ENCODE measurements at regions of chr16 and their contacts with region 1.

Region 1: DNA sequence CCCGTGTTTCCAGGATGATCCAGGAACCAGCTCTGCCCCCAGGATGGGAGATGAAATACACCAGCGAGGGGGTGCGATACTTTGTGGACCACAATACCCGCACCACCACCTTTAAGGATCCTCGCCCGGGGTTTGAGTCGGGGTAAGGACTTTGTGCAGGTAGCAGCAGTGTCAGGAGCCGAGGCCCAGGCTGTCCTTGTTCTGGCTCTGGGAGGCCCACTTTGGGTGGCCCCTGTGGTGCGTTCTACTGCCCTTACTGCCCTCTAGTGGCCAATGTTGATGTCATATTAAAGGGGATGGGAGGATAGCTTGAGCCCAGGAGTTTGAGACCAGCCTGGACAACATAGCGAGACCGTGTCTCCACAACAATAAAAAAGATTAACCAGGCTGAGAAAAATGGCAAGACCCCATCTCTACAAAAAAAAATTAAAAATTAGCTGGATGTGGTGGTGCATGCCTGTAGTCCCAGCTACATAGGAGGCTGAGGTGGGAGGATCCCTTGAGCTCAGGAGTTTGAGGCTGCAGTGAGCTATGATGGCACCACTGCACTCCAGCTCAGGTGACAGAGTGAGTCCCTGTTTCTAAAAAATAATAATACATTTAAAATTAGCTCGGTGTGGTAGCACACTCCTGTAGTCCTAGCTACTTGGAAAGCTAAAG is 20.9 kb upstream of the CLEC18A start:
- DNase-seq: peak; percentile 58
- H3K4me3 ChIP-seq: no peak overlapping the region
- H3K27ac ChIP-seq: no peak overlapping the region
- H3K4me1 ChIP-seq: peaks cover 3% of the 10 kb centered on the region
- H3K27me3 ChIP-seq: no peaks in the 10 kb centered on the region
- CTCF ChIP-seq: peak; percentile 64 to 72
- POLR2A ChIP-seq: no peak

Region 2: GRCh38 chr16:69565671-69566239 is 364.5 kb before region 1 on chr16 and contains the start of gene NFAT5:
- CTCF ChIA-PET with region 1: no interaction called
- POLR2A ChIA-PET with region 1: no interaction called
- dilution Hi-C with region 1: no loop called
- intact Hi-C with region 1: no loop called
- DNase-seq: peak; percentile 94
- H3K4me3 ChIP-seq: peak within 1 kb of the TSS; percentile 84 to 95 (median 93)
- H3K27ac ChIP-seq: peak within 1 kb of the TSS; percentile 83
- H3K4me1 ChIP-seq: peaks cover 31% of the 10 kb centered on the region
- H3K27me3 ChIP-seq: no peaks in the 10 kb centered on the region
- CTCF ChIP-seq: no peak
- POLR2A ChIP-seq: peak; percentile 77
- total RNA-seq, gene NFAT5: 42.0 and 49.5 TPM in 2 replicates

Region 3: DNA sequence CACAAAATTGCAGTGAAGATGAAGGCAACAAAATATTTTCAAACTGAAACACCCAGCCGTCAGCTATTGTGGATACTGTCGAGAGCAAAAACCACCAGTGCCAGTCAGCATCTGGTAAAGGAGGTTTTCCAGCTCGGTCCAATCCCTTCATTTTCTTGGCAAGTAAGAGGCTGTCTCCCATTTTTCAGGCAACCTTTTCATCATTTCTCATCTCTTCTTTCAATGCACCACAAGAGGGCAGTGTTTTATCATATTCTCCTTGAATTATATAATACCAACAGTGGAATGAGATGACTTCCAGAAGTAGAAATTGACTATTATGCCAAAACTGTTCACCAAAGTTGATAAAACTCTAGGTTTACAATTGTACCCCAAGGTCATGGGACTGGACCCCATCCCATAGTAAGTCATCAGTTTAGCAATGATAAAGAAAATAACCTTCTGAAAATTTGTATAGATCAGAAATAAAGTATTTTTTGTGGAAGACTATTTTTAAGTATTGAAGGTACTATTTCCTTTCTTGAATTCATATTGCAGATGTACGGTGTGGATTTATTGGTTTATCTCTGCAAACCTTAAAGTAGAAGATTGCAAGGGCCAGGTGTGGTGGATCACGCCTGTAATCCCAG is 220.7 kb before region 1 on chr16:
- CTCF ChIA-PET with region 1: interaction called, 3 read pairs
- POLR2A ChIA-PET with region 1: no interaction called
- dilution Hi-C with region 1: no loop called
- intact Hi-C with region 1: loop called (anchors 2 kb)
- DNase-seq: peak; percentile 71
- H3K4me3 ChIP-seq: no peak overlapping the region
- H3K27ac ChIP-seq: no peak overlapping the region
- H3K4me1 ChIP-seq: no peaks in the 10 kb centered on the region
- H3K27me3 ChIP-seq: no peaks in the 10 kb centered on the region
- CTCF ChIP-seq: peak; percentile 37 to 55
- POLR2A ChIP-seq: no peak

Region 4: GRCh38 chr16:69796351-69797118 is 133.7 kb before region 1 on chr16:
- CTCF ChIA-PET with region 1: interaction called, 320 read pairs
- POLR2A ChIA-PET with region 1: no interaction called
- dilution Hi-C with region 1: no loop called
- intact Hi-C with region 1: loop called (anchors 1 kb)
- DNase-seq: peak; percentile 71
- H3K4me3 ChIP-seq: no peak overlapping the region
- H3K27ac ChIP-seq: no peak overlapping the region
- H3K4me1 ChIP-seq: no peaks in the 10 kb centered on the region
- H3K27me3 ChIP-seq: no peaks in the 10 kb centered on the region
- CTCF ChIP-seq: peak; percentile 73 to 74
- POLR2A ChIP-seq: no peak

Region 5: DNA sequence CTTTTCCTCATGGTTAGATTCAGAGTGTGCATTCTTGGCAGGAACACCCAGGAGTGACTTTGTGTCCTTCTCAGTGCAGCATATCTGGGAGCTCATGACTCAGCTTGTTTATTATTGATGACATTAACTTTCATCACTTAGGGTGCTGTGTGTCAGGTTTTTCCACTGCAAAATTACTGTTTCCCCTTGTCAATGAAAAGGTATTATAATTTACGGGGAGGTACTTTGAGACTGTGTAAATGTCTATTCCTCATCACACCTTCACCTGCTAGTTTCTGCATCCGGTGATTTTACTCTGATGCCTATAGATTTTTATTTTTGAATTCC is 117.6 kb before region 1 on chr16:
- CTCF ChIA-PET with region 1: interaction called, 13 read pairs
- POLR2A ChIA-PET with region 1: no interaction called
- dilution Hi-C with region 1: no loop called
- intact Hi-C with region 1: no loop called
- DNase-seq: no peak
- H3K4me3 ChIP-seq: no peak overlapping the region
- H3K27ac ChIP-seq: no peak overlapping the region
- H3K4me1 ChIP-seq: no peaks in the 10 kb centered on the region
- H3K27me3 ChIP-seq: no peaks in the 10 kb centered on the region
- CTCF ChIP-seq: no peak
- POLR2A ChIP-seq: no peak

Region 6: GRCh38 chr16:69848637-69849545 is 81.4 kb before region 1 on chr16:
- CTCF ChIA-PET with region 1: interaction called, 34 read pairs
- POLR2A ChIA-PET with region 1: no interaction called
- dilution Hi-C with region 1: no loop called
- intact Hi-C with region 1: no loop called
- DNase-seq: peak; percentile 94
- H3K4me3 ChIP-seq: peak overlapping the region in 1 of 3 experiments; percentile 33
- H3K27ac ChIP-seq: peak overlapping the region; percentile 65
- H3K4me1 ChIP-seq: peaks cover 10% of the 10 kb centered on the region
- H3K27me3 ChIP-seq: no peaks in the 10 kb centered on the region
- CTCF ChIP-seq: no peak
- POLR2A ChIP-seq: no peak

Region 7: GRCh38 chr16:69870761-69871160 is 59.5 kb before region 1 on chr16:
- CTCF ChIA-PET with region 1: interaction called, 14 read pairs
- POLR2A ChIA-PET with region 1: no interaction called
- dilution Hi-C with region 1: no loop called
- intact Hi-C with region 1: no loop called
- DNase-seq: no peak
- H3K4me3 ChIP-seq: no peak overlapping the region
- H3K27ac ChIP-seq: no peak overlapping the region
- H3K4me1 ChIP-seq: no peaks in the 10 kb centered on the region
- H3K27me3 ChIP-seq: no peaks in the 10 kb centered on the region
- CTCF ChIP-seq: no peak
- POLR2A ChIP-seq: no peak

Region 8: GRCh38 chr16:69917739-69918138 is 12.5 kb before region 1 on chr16:
- CTCF ChIA-PET with region 1: interaction called, 32 read pairs
- POLR2A ChIA-PET with region 1: no interaction called
- dilution Hi-C with region 1: no loop called
- intact Hi-C with region 1: no loop called
- DNase-seq: peak; percentile 74
- H3K4me3 ChIP-seq: no peak overlapping the region
- H3K27ac ChIP-seq: peak overlapping the region; percentile 68
- H3K4me1 ChIP-seq: peaks cover 11% of the 10 kb centered on the region
- H3K27me3 ChIP-seq: no peaks in the 10 kb centered on the region
- CTCF ChIP-seq: no peak
- POLR2A ChIP-seq: no peak

Region 9: GRCh38 chr16:71542377-71542776 is 1612.1 kb after region 1 on chr16:
- CTCF ChIA-PET with region 1: no interaction called
- POLR2A ChIA-PET with region 1: no interaction called
- dilution Hi-C with region 1: no loop called
- intact Hi-C with region 1: no loop called
- DNase-seq: peak; percentile 14
- H3K4me3 ChIP-seq: no peak overlapping the region
- H3K27ac ChIP-seq: no peak overlapping the region
- H3K4me1 ChIP-seq: no peaks in the 10 kb centered on the region
- H3K27me3 ChIP-seq: peaks cover 0 to 2% of the 10 kb centered on the region in 2 experiments
- CTCF ChIP-seq: peak; percentile 55 to 65
- POLR2A ChIP-seq: no peak

Measured in endothelial cell of umbilical vein (primary cell).